ENCODE measurements at regions of chr20 and their contacts with region 1.

Region 1: DNA sequence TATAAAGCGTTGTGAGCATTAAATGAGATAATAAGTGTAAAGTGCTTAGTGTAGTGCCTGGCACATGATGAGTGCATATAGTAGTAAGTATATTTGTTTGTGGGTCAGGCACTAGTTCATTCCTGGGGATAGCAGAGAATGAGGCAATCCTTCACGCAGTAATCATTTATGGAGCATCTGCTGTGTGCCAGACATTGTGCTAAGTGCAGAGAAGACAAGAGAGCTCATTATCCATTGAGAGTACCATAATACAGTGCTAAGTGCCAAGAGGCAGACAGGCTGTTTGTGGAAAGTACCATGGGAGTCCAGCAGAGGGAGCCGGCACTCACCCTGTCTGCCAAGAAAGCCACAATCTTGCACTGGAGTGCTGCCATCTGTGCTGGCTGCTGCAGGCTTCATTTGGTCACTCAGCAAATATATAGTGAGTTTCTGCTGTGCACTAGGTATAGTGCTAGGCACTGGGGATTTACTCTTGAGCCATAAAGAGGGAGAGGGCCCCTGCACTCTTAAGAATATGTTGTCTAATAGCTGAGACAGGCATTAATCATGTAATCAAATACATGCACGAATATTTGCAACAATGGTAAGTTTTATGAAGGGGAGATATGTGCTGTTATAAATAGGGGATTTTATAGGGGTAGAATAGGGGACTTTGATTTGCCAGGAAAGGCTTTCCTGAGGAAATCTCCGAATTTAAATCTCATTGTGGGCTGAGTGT is 12.9 kb upstream of the MROH8 start:
- DNase-seq: peak; percentile 93
- H3K27ac ChIP-seq: no peak overlapping the region
- CTCF ChIP-seq: peak; percentile 100

Region 2: DNA sequence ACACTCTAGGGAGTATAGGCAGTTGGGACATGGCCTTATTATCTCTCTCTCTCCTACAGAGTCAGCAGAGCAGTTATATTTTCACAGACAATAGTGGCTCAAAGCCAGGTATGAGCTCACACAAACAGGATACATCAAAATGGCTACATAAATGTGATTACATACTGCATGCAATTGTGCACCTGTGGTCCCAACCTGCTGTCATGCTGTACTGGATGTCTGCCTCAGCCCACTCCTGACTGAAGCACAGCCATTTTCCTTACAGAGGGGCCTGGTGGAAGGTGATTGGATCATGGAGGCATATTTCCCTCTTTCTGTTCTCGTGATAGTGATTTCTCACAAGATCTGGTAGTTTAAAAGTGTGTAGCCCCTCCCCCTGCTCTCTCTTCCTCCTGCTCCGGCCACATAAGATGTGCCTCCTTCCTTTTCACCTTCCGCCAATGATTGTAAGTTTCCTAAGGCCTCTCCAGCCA is 203.8 kb before region 1 on chr20:
- CTCF ChIA-PET with region 1: no interaction called
- POLR2A ChIA-PET with region 1: no interaction called
- DNase-seq: no peak
- H3K27ac ChIP-seq: no peak overlapping the region
- CTCF ChIP-seq: no peak

Region 3: GRCh38 chr20:37178839-37179670 is 13.2 kb before region 1 on chr20 and contains the starts of genes MROH8 and RPN2:
- CTCF ChIA-PET with region 1: interaction called, 15 read pairs
- POLR2A ChIA-PET with region 1: interaction called, 3 read pairs
- DNase-seq: peak; percentile 100
- H3K27ac ChIP-seq: peak within 1 kb of the TSS; percentile 98
- CTCF ChIP-seq: no peak

Region 4: GRCh38 chr20:37209661-37210314 is 17.5 kb after region 1 on chr20:
- CTCF ChIA-PET with region 1: interaction called, 18 read pairs
- POLR2A ChIA-PET with region 1: interaction called, 3 read pairs
- DNase-seq: peak; percentile 76
- H3K27ac ChIP-seq: peak overlapping the region; percentile 73
- CTCF ChIP-seq: no peak

Region 5: GRCh38 chr20:37223053-37223452 is 30.8 kb after region 1 on chr20:
- CTCF ChIA-PET with region 1: interaction called, 11 read pairs
- POLR2A ChIA-PET with region 1: no interaction called
- DNase-seq: peak; percentile 77
- H3K27ac ChIP-seq: no peak overlapping the region
- CTCF ChIP-seq: no peak

Region 6: DNA sequence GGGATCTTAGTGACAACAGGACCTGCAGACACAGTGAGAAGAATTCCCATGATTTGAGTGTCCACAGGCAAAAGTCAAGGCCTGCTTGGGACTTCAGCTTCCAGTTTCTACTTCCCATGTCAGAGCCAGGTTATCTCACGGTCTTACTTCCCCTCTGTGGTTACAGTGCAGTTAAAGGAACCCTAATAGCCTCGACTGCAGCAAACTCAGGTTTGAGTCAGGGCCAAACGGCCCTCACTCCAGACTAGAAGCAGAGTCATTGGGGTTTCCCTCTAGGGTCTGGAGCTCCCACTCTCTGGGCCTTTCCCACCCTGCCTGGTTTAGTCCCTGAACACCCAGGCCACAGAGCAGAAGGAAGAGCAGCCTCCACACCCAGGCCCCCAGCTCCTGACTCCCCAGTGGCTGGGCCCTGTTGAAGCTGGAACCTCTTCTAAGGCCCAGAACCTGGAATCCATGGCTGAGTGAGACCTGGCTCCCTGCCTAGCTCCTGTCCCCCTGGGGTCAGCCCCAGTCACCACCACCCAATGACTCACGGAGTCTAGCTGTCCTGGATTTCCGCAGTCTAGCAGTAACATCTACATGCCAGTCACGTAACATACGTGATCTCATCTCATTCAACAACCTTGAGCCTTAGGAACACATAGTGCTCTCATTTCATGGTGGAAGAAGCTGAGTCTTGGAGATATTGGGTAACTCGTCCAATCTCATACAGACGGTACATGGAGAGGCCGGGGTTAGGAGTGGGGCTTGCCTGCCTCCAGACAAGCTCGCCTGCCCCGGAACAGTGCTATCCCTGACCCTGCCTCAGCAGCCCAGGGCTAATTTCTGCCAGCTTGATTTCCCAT is 78.5 kb after region 1 on chr20:
- CTCF ChIA-PET with region 1: no interaction called
- POLR2A ChIA-PET with region 1: no interaction called
- DNase-seq: no peak
- H3K27ac ChIP-seq: no peak overlapping the region
- CTCF ChIP-seq: no peak

Region 7: GRCh38 chr20:37336369-37337207 is 144.3 kb after region 1 on chr20:
- CTCF ChIA-PET with region 1: no interaction called
- POLR2A ChIA-PET with region 1: no interaction called
- DNase-seq: no peak
- H3K27ac ChIP-seq: peak overlapping the region; percentile 72
- CTCF ChIP-seq: no peak

Region 8: DNA sequence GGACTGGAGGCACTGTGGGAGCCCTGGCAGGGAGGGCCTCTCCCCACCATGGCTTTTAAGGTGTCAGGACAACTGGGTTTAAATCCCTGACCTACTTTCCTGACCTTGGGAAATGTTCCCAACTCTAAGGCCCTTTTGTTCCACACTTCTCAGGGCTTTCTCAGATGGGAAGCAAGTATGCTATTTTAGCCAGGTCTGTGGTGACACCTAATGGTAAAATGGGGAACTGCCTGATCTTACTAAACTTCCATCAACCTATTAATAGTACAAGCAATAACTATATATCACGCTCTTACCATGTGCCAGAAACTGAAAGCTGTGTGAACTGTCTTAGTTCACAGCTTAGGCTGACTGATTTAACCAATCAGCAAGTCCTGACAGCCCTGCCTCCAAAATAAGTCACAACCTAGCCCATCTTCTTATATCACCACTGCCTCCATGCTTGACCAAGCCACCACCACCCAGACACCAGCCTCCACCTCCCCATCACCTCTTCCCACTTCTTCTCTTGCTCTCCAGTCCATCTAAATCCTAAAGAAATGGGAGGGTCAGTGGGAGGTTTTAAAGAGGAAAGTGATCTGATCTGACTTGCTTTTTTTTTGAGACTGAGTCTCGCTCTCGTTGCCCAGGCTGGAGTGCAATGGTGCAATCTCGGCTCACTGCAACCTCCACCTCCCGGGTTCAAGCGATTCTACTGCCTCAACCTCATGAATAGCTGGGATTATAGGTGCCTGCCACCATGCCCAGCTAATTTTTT is 342.3 kb after region 1 on chr20:
- CTCF ChIA-PET with region 1: interaction called, 18 read pairs
- POLR2A ChIA-PET with region 1: no interaction called
- DNase-seq: peak; percentile 70
- H3K27ac ChIP-seq: no peak overlapping the region
- CTCF ChIP-seq: peak; percentile 95

Region 9: DNA sequence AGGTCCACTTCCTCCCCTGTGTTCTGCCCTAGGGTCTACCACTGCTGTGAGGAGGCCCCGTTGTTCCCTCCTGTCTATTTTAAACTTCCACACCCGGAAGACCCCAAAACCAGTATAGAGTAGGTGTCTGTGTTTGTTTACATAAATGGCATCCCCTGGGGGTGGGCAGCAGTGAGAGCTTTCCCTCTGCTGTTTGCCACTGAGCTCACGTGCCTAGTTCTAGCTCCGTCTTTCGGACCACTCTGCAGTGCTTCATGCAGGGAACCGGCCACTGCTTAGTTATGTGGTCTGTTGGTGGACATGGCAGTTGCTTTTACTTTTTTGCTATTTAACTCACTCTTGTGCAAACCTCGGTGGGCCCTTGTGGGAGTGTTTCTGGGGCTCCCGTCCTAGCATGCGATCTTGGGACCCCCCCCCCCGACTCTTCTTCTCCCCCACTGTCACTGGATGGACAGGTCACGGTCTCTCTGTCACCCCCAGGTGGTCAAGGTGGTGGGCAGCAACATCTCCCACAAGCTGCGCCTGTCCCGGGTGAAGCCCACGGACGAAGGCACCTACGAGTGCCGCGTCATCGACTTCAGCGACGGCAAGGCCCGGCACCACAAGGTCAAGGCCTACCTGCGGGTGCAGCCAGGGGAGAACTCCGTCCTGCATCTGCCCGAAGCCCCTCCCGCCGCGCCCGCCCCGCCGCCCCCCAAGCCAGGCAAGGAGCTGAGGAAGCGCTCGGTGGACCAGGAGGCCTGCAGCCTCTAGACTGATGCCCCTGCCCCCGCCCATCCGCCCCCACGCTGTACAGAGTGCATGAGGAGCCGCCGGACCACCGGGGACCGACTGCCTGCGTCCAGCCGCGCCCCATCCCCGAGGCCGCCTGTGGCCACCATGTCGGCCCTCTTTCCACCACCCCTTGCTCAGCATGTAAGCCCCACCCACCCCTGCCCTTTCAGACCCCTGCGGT is 751.5 kb after region 1 on chr20:
- CTCF ChIA-PET with region 1: no interaction called
- POLR2A ChIA-PET with region 1: no interaction called
- DNase-seq: no peak
- H3K27ac ChIP-seq: no peak overlapping the region
- CTCF ChIP-seq: no peak